GM18951 (cell line): ENCODE measurements at regions of chr5 and their contacts with region 1.

Region 1: GRCh38 chr5:158682631-158683030 is 417.1 kb downstream of the EBF1 start:
- POLR2A ChIP-seq: no peak

Region 2: DNA sequence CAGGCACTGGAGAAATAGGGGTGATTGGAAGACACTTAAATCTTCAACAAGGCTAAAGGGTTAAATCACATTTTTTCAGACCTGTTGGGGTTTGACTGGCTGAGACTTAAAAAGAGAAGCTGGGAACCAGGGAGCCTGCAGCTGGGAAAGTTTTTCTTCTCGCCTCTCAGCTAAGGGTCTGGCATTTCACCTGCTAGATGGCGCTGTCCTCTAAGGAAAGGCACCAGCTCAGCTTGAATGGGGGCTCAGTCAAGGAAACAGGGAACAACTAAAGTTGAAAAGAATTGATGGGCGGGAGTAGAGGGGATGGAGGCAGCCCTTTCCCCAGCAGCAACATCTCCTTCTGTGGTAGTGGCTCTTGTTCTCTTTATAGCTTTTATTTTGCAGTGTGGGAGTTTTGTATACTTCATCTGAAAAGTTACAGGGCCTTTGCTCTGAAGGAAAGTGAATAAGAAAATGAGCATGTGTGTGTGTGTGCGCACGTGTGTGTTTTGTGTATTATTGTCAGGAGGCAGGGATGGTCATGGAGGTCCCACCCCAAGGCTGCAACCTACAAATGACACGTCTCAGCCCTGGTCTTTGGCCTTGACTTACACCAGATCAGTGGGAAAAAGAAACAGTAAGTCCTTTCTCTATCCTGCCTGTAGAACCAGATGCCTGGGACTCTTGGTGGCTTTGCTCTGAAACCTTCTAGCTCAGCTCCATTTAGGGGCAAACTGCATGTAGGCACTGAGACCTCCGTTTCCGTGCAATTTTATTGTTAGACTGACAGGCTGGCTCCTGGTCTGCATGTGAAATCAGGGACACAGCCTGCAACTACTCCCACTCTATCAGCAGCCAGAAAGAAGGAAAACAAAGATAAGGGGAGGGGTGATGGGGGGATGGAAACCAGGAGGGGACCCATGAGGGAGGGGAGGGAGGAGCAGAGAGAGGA is 507.4 kb before region 1 on chr5:
- in situ Hi-C with region 1: loop called (anchors 10 kb)
- POLR2A ChIP-seq: no peak